ENCODE measurements at regions of chr16 and their contacts with region 1.

Region 1: GRCh38 chr16:20146759-20147490 is 73.2 kb upstream of the GPR139 start:
- DNase-seq: no peak
- ATAC-seq: no peak
- H3K4me3 ChIP-seq: no peak overlapping the region
- H3K27ac ChIP-seq: no peak overlapping the region
- H3K4me1 ChIP-seq: no peaks in the 10 kb centered on the region
- H3K27me3 ChIP-seq: no peaks in the 10 kb centered on the region

Region 2: GRCh38 chr16:20122011-20122410 is 24.9 kb before region 1 on chr16:
- intact Hi-C with region 1: loop called in 1 of 2 experiments (anchors 2 kb)
- DNase-seq: no peak
- ATAC-seq: no peak
- H3K4me3 ChIP-seq: no peak overlapping the region
- H3K27ac ChIP-seq: no peak overlapping the region
- H3K4me1 ChIP-seq: no peaks in the 10 kb centered on the region
- H3K27me3 ChIP-seq: peaks cover 0 to 3% of the 10 kb centered on the region in 2 donors

Measured in aorta (tissue), 5 donors.